ENCODE measurements at regions of chr1 and their contacts with region 1.

Region 1: GRCh38 chr1:81549604-81550127 is 251.1 kb upstream of the ADGRL2 start:
- DNase-seq: no peak
- H3K4me3 ChIP-seq: no peak overlapping the region
- CTCF ChIP-seq: no peak

Region 2: GRCh38 chr1:81760477-81761097 is 210.9 kb after region 1 on chr1:
- CTCF ChIA-PET with region 1: interaction called, 102 read pairs
- POLR2A ChIA-PET with region 1: interaction called, 3 read pairs
- DNase-seq: no peak
- H3K4me3 ChIP-seq: no peak overlapping the region
- CTCF ChIP-seq: peak; percentile 18

Measured in AG04449 (cell line).